GM12878 (cell line): ENCODE measurements at regions of chr12 and their contacts with region 1.

Region 1: GRCh38 chr12:120904197-120904773 is at the start of gene SPPL3:
- DNase-seq: peak; percentile 43
- ATAC-seq: peak; percentile 81
- H3K4me3 ChIP-seq: peak within 1 kb of the TSS; percentile 91
- H3K27ac ChIP-seq: peak within 1 kb of the TSS; percentile 79
- H3K4me1 ChIP-seq: 0 out of 2 replicates have a peak, but pooled peaks cover 3% of the 10 kb centered on the region
- H3K27me3 ChIP-seq: no peaks in the 10 kb centered on the region
- CTCF ChIP-seq: peak in 1 of 3 experiments; percentile 33; a peak in 2 of 6 replicates
- EP300 ChIP-seq: no peak
- POLR2A ChIP-seq: peak; percentile 71
- RAD21 ChIP-seq: no peak
- polyA plus RNA-seq, gene SPPL3: 5.7 to 8.3 TPM

Region 2: GRCh38 chr12:119667577-119668323 is 1236.5 kb before region 1 on chr12 and contains the start of gene PRKAB1:
- CTCF ChIA-PET with region 1: no interaction called
- POLR2A ChIA-PET with region 1: interaction called, 15 read pairs
- RAD21 ChIA-PET with region 1: no interaction called
- SMC1A ChIA-PET with region 1: no interaction called
- in situ Hi-C with region 1: no loop called
- intact Hi-C with region 1: no loop called
- DNase-seq: peak; percentile 89
- ATAC-seq: peak; percentile 91
- H3K4me3 ChIP-seq: peak within 1 kb of the TSS; percentile 98
- H3K27ac ChIP-seq: peak within 1 kb of the TSS; percentile 97
- H3K4me1 ChIP-seq: peaks cover 21% of the 10 kb centered on the region
- H3K27me3 ChIP-seq: no peaks in the 10 kb centered on the region
- CTCF ChIP-seq: peak; percentile 78 to 97 (median 93); a peak in 4 of 6 replicates
- EP300 ChIP-seq: peak in 1 of 2 experiments; percentile 36; a peak in 1 of 4 replicates
- POLR2A ChIP-seq: peak; percentile 97
- RAD21 ChIP-seq: peak; percentile 51
- polyA plus RNA-seq, gene PRKAB1: 24.6 to 28.8 TPM

Region 3: DNA sequence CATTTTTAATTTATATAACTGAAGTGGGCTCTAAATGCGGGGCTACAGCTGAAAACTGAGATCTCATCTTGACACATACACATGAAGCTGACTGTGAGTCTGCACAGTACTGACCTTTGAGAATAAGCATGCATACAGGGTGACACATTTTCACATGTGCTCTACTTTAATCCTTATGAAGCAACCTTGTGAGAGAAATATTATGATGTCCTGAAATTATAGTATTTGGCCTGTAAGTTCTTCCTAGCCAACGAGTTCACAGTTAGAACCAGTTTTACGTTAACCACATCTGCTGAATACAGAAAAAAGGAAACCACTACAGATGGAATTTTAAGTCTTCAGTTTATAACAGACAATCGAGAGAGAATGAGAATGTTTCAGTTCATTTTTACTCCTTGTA is 70.4 kb before region 1 on chr12:
- CTCF ChIA-PET with region 1: interaction called, 5 read pairs
- POLR2A ChIA-PET with region 1: interaction called, 4 read pairs
- RAD21 ChIA-PET with region 1: interaction called, 4 read pairs
- SMC1A ChIA-PET with region 1: interaction called, 11 read pairs
- in situ Hi-C with region 1: no loop called
- intact Hi-C with region 1: no loop called
- DNase-seq: no peak
- ATAC-seq: peak; percentile 67
- H3K4me3 ChIP-seq: peak overlapping the region; percentile 66
- H3K27ac ChIP-seq: peak overlapping the region; percentile 96
- H3K4me1 ChIP-seq: peaks cover 64% of the 10 kb centered on the region
- H3K27me3 ChIP-seq: no peaks in the 10 kb centered on the region
- CTCF ChIP-seq: no peak
- EP300 ChIP-seq: no peak
- POLR2A ChIP-seq: no peak
- RAD21 ChIP-seq: no peak

Region 4: GRCh38 chr12:120856980-120857379 is 47.3 kb before region 1 on chr12:
- CTCF ChIA-PET with region 1: interaction called, 22 read pairs
- POLR2A ChIA-PET with region 1: no interaction called
- RAD21 ChIA-PET with region 1: interaction called, 12 read pairs
- SMC1A ChIA-PET with region 1: interaction called, 11 read pairs
- in situ Hi-C with region 1: no loop called
- intact Hi-C with region 1: loop called (anchors 5 kb)
- DNase-seq: no peak
- ATAC-seq: no peak; the same call in 2 of the 3 replicates
- H3K4me3 ChIP-seq: no peak overlapping the region
- H3K27ac ChIP-seq: peak overlapping the region; percentile 27; the same call in 1 of the 2 replicates
- H3K4me1 ChIP-seq: peaks cover 32% of the 10 kb centered on the region
- H3K27me3 ChIP-seq: no peaks in the 10 kb centered on the region
- CTCF ChIP-seq: peak; percentile 30 to 52 (median 34); a peak in 4 of 6 replicates
- EP300 ChIP-seq: no peak
- POLR2A ChIP-seq: no peak
- RAD21 ChIP-seq: peak; percentile 63

Region 5: DNA sequence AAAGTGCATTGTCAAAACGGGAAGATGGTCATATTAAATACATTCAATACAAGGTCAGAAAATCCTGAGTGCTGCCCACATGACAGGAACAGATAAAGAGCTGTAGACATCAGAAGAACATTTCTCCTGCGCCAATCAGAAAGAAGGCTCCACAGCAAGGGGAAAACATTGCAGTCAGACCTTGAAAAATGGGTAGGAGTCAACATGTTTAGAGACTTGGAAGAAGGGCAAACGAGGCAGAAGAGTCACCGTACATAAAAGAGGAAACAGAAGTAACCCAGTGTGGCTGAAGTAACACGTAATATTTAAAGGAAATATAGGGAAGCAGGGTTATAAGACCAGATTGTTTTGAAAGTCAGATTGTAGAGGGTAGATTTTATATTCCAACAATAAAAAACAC is 12.0 kb before region 1 on chr12:
- CTCF ChIA-PET with region 1: interaction called, 4 read pairs
- POLR2A ChIA-PET with region 1: interaction called, 14 read pairs
- RAD21 ChIA-PET with region 1: interaction called, 16 read pairs
- SMC1A ChIA-PET with region 1: interaction called, 38 read pairs
- in situ Hi-C with region 1: no loop called
- intact Hi-C with region 1: no loop called
- DNase-seq: no peak
- ATAC-seq: no peak
- H3K4me3 ChIP-seq: no peak overlapping the region
- H3K27ac ChIP-seq: no peak overlapping the region
- H3K4me1 ChIP-seq: peaks cover 2% of the 10 kb centered on the region
- H3K27me3 ChIP-seq: no peaks in the 10 kb centered on the region
- CTCF ChIP-seq: no peak
- EP300 ChIP-seq: no peak
- POLR2A ChIP-seq: no peak
- RAD21 ChIP-seq: no peak